Heart left ventricle (tissue), 16 donors: ENCODE measurements at regions of chr11 and their contacts with region 1.

Region 1: GRCh38 chr11:22657101-22657694 is 9.2 kb upstream of the GAS2 start:
- DNase-seq: no peak
- ATAC-seq: no peak
- H3K4me3 ChIP-seq: no peak overlapping the region
- H3K27ac ChIP-seq: no peak overlapping the region
- H3K4me1 ChIP-seq: no peaks in the 10 kb centered on the region
- H3K27me3 ChIP-seq: no peaks in the 10 kb centered on the region
- CTCF ChIP-seq: no peak
- POLR2A ChIP-seq: no peak

Region 2: DNA sequence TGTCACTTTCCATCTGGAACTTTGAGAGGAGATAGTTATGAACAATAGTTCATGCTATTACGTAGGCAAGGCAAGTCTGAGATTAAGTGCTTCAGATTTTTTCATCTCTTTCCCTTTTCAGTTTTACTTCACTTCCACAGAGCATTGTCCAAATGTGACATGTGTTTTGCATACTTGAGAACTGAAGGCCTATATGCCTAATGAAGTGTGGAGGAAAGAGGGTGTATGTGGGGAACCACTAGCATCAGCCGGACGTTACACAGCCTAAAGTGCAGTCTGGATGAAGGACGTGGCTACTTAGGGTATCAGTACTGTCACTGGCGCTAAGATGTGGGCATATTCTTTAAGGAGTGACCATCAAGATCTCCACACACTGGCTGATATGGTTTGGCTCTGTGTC is 57.7 kb before region 1 on chr11:
- intact Hi-C with region 1: loop called in 1 of 10 experiments (anchors 10 kb)
- DNase-seq: no peak
- ATAC-seq: no peak
- H3K4me3 ChIP-seq: no peak overlapping the region
- H3K27ac ChIP-seq: no peak overlapping the region
- H3K4me1 ChIP-seq: no peaks in the 10 kb centered on the region
- H3K27me3 ChIP-seq: no peaks in the 10 kb centered on the region
- CTCF ChIP-seq: no peak
- POLR2A ChIP-seq: no peak